Natural killer cell (primary cell): ENCODE measurements at regions of chr5 and their contacts with region 1.

Region 1: DNA sequence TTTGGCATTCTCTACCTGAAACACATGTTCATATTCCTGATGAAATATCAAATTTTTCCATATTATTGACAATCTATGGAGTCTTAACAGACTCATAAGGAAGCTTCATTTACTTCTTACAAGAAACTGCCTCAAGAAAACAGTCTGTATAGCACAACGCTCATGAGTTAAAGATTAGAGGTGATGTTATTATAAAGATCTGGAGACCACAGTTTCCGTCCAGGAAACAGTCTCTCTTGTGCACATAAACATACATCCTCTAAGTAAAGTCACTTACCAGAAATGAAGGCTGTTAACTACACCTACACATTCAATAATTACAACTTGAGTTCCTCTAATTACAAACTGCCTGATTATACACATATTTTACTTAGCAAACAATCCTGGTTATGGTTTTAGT is 86.9 kb downstream of the RAPGEF6 start:
- DNase-seq: peak in 1 of 2 donors; percentile 78
- ATAC-seq: peak; percentile 91 to 95 (median 93)
- H3K4me3 ChIP-seq: peak overlapping the region; percentile 50
- H3K4me3 Mint-ChIP-seq: peak overlapping the region; percentile 98
- H3K27ac ChIP-seq: peak overlapping the region; percentile 77
- H3K27ac Mint-ChIP-seq: peak overlapping the region; percentile 93 to 98
- H3K4me1 ChIP-seq: peaks cover 21% of the 10 kb centered on the region
- H3K4me1 Mint-ChIP-seq: peaks cover 51% of the 10 kb centered on the region in 2 donors
- H3K27me3 ChIP-seq: no peaks in the 10 kb centered on the region
- H3K27me3 Mint-ChIP-seq: no peaks in the 10 kb centered on the region
- CTCF ChIP-seq: no peak

Region 2: GRCh38 chr5:131413605-131414559 is 134.3 kb before region 1 on chr5:
- intact Hi-C with region 1: no loop called
- DNase-seq: peak in 1 of 2 donors; percentile 60
- ATAC-seq: peak; percentile 31 to 52 (median 44)
- H3K4me3 ChIP-seq: no peak overlapping the region
- H3K4me3 Mint-ChIP-seq: peak overlapping the region; percentile 21
- H3K27ac ChIP-seq: peak overlapping the region; percentile 2
- H3K27ac Mint-ChIP-seq: peak overlapping the region; percentile 76 to 84
- H3K4me1 ChIP-seq: peaks cover 3% of the 10 kb centered on the region
- H3K4me1 Mint-ChIP-seq: peaks cover 20 to 22% of the 10 kb centered on the region in 2 donors
- H3K27me3 ChIP-seq: no peaks in the 10 kb centered on the region
- H3K27me3 Mint-ChIP-seq: no peaks in the 10 kb centered on the region
- CTCF ChIP-seq: no peak

Region 3: DNA sequence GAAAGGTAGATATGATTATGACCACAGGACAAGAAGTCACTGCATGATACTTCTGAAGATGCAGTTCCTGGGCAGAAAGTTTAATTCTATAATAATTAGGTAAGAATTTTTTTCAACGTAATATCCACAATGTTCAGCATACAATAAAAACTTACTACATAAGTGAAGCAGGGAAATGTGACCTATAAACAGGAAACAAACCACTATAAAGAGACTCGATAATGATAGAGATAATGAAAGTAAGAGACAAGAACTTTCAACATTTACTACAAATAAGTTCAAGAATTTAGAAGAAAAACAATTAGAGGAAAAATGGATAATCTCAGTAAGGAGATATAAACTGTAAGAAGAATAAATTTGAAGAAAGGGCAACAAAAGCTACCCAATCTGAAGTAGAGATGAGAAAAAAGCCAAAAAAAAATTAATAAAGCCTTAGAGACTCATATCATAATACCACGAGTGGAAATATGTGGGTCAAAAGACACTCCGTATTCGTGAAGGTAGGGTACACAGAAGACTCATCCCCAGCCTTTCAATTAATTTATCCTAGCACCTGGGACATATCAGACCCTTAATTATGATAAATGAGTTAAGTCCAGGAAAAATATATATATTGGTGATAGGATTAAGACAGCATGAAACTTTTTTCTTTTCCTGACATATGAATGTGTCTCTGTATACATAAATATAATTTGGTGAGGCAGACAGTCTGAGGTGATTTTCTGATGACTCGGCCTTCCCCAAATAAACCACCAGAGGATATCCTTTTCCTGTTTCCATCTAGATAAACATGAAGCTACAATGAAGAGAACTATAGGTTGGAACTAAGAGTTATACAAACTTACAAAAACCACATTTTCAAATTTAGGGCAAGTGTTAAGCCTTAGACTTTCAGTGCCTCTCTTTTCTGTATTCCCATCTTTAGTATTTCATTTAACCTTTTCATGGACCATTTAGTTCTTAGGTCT is 33.6 kb before region 1 on chr5:
- intact Hi-C with region 1: loop called (anchors 1 kb)
- DNase-seq: peak in 1 of 2 donors; percentile 79
- ATAC-seq: peak; percentile 84 to 91 (median 90)
- H3K4me3 ChIP-seq: peak overlapping the region; percentile 14
- H3K4me3 Mint-ChIP-seq: peak overlapping the region; percentile 90
- H3K27ac ChIP-seq: peak overlapping the region; percentile 88
- H3K27ac Mint-ChIP-seq: peak overlapping the region; percentile 91 to 96
- H3K4me1 ChIP-seq: peaks cover 10% of the 10 kb centered on the region
- H3K4me1 Mint-ChIP-seq: peaks cover 43 to 44% of the 10 kb centered on the region in 2 donors
- H3K27me3 ChIP-seq: no peaks in the 10 kb centered on the region
- H3K27me3 Mint-ChIP-seq: no peaks in the 10 kb centered on the region
- CTCF ChIP-seq: no peak